PC-9 (cell line): ENCODE measurements at regions of chr12 and their contacts with region 1.

Region 1: DNA sequence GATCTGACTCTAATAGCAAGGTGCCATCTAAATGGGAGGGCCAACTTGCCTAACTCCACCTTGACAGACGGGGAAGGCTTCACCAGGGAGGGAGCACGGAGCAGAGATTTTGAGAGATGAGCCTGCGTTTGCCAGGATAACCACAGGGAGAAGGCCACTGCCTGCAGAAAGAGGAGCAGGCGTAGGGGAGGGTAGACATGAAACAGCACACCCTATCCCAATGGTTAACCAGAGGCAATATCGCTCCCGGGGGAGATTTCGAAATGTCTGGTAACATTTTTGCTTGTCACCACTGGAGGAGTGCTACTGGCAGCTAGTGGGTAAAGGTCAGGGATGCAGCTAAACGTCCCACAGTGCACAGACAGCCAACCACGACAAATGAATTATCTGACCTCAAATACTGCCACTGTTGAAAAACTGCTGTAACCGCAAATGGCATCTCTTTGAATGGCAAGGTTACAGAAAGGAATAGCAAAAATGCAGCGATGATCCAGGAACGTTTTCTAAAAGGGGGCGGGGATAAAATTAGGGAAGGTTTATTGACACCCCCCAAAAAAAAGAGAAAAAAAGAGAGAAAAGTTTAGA is 126.0 kb upstream of the ATF7IP start:
- DNase-seq: peak; percentile 84 to 93
- H3K4me3 ChIP-seq: peak overlapping the region; percentile 51
- H3K27ac ChIP-seq: peak overlapping the region; percentile 94
- H3K4me1 ChIP-seq: peaks cover 28% of the 10 kb centered on the region
- H3K27me3 ChIP-seq: no peaks in the 10 kb centered on the region
- CTCF ChIP-seq: no peak

Region 2: DNA sequence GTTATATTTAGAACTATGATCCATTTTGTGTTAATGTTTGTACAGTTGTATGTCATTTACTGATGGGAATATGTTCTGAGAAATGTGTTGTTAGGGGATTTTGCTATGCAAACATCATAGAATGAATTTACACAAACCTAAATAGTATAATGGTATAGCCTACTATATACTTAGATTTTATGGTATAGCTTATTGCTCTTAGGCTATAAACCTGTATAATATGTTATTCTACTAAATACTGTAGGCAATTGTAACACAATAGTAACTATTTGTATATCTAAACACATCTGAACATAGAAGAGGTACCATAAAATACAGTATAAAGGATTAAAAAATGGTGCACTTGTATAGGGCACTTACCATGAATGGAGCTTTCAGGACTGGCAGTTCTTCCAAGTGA is 152.6 kb before region 1 on chr12:
- CTCF ChIA-PET with region 1: no interaction called
- POLR2A ChIA-PET with region 1: no interaction called
- intact Hi-C with region 1: no loop called
- DNase-seq: no peak
- H3K4me3 ChIP-seq: no peak overlapping the region
- H3K27ac ChIP-seq: no peak overlapping the region
- H3K4me1 ChIP-seq: no peaks in the 10 kb centered on the region
- H3K27me3 ChIP-seq: no peaks in the 10 kb centered on the region
- CTCF ChIP-seq: no peak

Region 3: DNA sequence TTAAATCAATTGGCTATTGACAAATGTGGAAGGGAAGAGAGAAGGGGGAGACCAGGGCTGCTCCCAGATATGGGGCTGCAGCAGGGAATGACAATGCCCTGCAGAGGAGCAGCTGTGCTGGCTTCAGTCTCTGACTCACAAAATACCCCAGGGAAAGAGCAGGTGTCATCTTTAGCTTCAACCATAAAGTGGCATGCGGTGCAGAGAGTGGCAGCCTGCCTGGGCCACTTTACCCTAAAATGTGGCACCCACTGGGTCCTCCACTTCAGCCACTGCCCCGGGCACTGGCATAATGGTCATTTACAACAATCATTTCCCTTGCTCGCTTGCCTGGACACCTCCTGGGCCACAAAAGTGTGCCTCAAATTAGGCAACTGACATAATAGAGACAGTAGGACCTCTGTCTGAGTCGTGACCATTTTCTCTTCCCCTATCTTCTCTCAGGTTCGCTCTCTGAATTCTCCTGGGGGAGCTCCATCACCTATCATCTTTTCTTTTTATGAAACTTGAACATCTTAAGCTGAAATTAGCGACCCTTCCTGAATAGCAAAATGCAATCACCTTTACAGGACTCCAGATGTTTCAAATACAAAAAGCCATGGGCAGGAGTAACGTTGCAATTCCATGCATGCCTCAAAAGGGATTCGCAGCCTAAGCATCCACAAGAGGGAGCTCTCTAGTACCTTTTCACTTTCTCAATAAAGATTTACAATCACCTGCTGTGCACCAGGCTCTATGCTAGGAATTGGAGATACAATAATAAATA is 53.8 kb before region 1 on chr12:
- CTCF ChIA-PET with region 1: interaction called, 6 read pairs
- POLR2A ChIA-PET with region 1: no interaction called
- intact Hi-C with region 1: loop called (anchors 2 kb)
- DNase-seq: peak; percentile 39 to 48
- H3K4me3 ChIP-seq: no peak overlapping the region
- H3K27ac ChIP-seq: no peak overlapping the region
- H3K4me1 ChIP-seq: 0 out of 2 replicates have a peak, but pooled peaks cover 7% of the 10 kb centered on the region
- H3K27me3 ChIP-seq: no peaks in the 10 kb centered on the region
- CTCF ChIP-seq: peak; percentile 83

Region 4: GRCh38 chr12:14365294-14366208 is 126.1 kb after region 1 on chr12 and contains the start of gene ATF7IP:
- CTCF ChIA-PET with region 1: interaction called, 13 read pairs
- POLR2A ChIA-PET with region 1: interaction called, 9 read pairs
- intact Hi-C with region 1: loop called (anchors 1 kb)
- DNase-seq: peak; percentile 94 to 95
- H3K4me3 ChIP-seq: peak within 1 kb of the TSS; percentile 90
- H3K27ac ChIP-seq: peak within 1 kb of the TSS; percentile 89
- H3K4me1 ChIP-seq: peaks cover 23% of the 10 kb centered on the region
- H3K27me3 ChIP-seq: no peaks in the 10 kb centered on the region
- CTCF ChIP-seq: no peak; the same call in 1 of the 2 replicates
- total RNA-seq, gene ATF7IP: 72.2 and 94.7 TPM in 2 replicates

Region 5: DNA sequence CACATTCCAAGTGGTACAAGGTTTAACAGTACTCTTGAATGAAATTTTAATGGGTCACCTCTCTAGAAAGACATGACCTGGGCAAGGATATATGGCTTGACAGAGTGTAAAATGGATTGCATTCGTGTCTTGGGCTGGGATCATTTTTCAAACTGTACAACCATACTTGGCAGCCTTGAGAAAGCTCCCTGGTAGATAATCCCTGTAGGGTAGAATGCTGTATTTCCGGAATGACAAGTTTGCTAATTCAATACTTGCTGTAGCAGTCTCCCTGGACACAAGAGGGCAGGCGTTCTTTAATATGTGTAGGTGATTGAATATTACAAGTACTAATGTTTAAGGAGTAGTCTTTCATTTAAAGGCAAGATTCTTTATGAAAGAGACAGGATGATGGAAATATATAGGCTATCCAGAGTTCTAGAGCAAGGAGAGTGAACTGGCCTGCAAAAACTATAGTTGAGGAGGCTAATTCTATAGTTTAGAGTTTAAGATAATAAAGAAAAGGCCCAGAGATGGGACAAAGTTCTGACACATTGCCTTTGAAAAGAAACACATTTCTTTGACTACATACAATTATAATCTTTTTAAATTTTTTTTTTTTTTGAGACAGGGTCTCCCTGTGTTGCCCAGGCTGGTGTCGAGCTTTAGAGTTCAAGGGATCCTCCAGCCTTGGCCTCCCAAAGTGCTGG is 274.9 kb after region 1 on chr12:
- CTCF ChIA-PET with region 1: interaction called, 7 read pairs
- POLR2A ChIA-PET with region 1: interaction called, 8 read pairs
- intact Hi-C with region 1: loop called (anchors 5 kb)
- DNase-seq: peak; percentile 66 to 93
- H3K4me3 ChIP-seq: no peak overlapping the region
- H3K27ac ChIP-seq: no peak overlapping the region
- H3K4me1 ChIP-seq: peaks cover 18% of the 10 kb centered on the region
- H3K27me3 ChIP-seq: no peaks in the 10 kb centered on the region
- CTCF ChIP-seq: peak; percentile 79

Region 6: DNA sequence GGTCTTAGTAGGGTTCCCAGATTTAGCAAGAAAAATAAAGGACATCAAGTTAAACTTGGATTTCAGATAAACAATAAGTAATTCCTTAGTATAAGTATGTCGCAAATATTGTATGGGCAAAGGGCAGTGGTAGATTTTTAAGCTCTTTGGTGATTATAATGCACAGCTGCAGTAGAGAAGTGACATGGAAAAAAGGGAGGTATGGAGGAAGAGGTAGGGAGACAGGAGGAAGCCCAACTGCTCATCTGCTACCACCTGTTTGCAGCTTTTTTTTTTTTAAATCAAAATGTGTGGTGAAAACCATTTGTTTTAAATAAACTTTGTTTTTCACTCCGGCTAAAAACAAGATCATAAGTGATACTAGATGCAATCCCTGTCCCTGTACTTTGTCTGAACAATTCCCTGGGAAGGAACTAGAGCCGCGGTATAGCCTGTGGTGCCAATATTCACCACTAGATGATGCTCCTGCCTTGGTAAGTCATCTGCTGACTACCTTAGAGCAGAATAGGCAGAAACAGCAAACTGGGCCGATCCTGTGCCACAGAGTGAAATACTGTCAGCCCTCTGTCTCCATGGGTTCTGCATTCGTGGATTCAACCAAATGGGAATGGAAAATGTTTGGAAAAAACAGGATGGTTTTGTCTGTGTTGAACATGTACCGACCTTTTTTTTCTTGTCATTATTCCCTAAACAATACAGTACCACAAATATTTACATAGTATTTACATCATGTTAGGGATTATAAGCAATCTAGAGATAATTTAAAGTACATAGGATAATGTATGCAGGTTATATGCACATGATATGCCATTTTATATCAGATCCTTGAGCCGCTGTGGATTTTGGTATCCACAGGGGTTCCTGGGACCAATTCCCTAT is 390.6 kb after region 1 on chr12:
- CTCF ChIA-PET with region 1: no interaction called
- POLR2A ChIA-PET with region 1: no interaction called
- intact Hi-C with region 1: loop called (anchors 5 kb)
- DNase-seq: peak; percentile 51 to 75
- H3K4me3 ChIP-seq: no peak overlapping the region
- H3K27ac ChIP-seq: no peak overlapping the region
- H3K4me1 ChIP-seq: no peaks in the 10 kb centered on the region
- H3K27me3 ChIP-seq: no peaks in the 10 kb centered on the region
- CTCF ChIP-seq: peak; percentile 94